ENCODE measurements at regions of chr11 and their contacts with region 1.

Region 1: GRCh38 chr11:113647108-113647507 is 59.0 kb downstream of the TMPRSS5 start:
- DNase-seq: no peak
- ATAC-seq: no peak
- H3K4me3 ChIP-seq: no peak overlapping the region
- H3K4me3 Mint-ChIP-seq: no peak overlapping the region
- H3K27ac ChIP-seq: no peak overlapping the region
- H3K27ac Mint-ChIP-seq: no peak overlapping the region
- H3K4me1 ChIP-seq: no peaks in the 10 kb centered on the region
- H3K4me1 Mint-ChIP-seq: no peaks in the 10 kb centered on the region
- H3K27me3 ChIP-seq: peaks cover 0 to 3% of the 10 kb centered on the region in 2 experiments
- H3K27me3 Mint-ChIP-seq: peaks cover 7% of the 10 kb centered on the region
- CTCF ChIP-seq: no peak

Region 2: DNA sequence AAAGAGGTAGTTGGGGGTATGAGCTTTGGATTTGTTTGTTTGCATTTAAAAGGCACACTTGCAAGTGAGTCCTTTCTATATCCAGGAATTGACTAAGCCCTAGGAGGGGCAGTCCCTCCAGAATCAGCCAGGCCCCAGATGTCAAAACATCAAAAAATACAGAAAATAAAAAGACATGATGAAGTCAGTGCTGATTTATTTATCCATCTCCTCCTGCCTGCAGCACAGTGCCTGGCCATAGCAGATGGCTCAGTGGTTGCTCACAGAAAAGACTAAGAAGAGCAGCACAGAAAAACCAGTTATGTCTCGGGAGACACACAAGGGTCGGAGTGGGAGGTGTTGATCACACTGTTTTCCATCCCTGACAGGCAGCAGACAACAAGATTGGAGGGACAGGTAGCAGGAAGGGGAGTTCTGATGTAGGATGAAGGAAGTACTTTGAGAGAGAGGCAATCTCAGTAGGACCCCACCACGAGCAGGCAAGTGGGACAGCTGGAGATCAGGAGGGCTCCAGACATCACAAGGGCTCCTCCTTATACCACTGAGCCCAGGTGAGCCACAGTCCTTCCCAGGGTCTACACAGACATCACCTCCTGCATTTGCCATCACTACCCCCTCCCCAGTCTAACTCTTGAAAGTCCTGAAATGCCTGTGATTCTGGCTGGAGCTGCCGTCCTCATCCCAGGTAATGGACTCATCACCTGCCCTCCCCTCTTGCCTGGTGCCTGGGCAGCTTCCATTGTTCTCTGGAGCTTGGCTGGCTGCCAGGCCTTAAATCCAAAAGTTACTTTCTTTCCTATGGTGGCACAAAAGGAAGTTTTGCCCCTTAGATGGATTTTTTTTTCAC is 26.7 kb after region 1 on chr11:
- CTCF ChIA-PET with region 1: no interaction called
- POLR2A ChIA-PET with region 1: no interaction called
- intact Hi-C with region 1: loop called in 1 of 2 experiments (anchors 1 kb)
- DNase-seq: no peak
- ATAC-seq: no peak
- H3K4me3 ChIP-seq: no peak overlapping the region
- H3K4me3 Mint-ChIP-seq: no peak overlapping the region
- H3K27ac ChIP-seq: no peak overlapping the region
- H3K27ac Mint-ChIP-seq: no peak overlapping the region
- H3K4me1 ChIP-seq: no peaks in the 10 kb centered on the region
- H3K4me1 Mint-ChIP-seq: no peaks in the 10 kb centered on the region
- H3K27me3 ChIP-seq: no peaks in the 10 kb centered on the region
- H3K27me3 Mint-ChIP-seq: peaks cover 8% of the 10 kb centered on the region
- CTCF ChIP-seq: no peak

Region 3: DNA sequence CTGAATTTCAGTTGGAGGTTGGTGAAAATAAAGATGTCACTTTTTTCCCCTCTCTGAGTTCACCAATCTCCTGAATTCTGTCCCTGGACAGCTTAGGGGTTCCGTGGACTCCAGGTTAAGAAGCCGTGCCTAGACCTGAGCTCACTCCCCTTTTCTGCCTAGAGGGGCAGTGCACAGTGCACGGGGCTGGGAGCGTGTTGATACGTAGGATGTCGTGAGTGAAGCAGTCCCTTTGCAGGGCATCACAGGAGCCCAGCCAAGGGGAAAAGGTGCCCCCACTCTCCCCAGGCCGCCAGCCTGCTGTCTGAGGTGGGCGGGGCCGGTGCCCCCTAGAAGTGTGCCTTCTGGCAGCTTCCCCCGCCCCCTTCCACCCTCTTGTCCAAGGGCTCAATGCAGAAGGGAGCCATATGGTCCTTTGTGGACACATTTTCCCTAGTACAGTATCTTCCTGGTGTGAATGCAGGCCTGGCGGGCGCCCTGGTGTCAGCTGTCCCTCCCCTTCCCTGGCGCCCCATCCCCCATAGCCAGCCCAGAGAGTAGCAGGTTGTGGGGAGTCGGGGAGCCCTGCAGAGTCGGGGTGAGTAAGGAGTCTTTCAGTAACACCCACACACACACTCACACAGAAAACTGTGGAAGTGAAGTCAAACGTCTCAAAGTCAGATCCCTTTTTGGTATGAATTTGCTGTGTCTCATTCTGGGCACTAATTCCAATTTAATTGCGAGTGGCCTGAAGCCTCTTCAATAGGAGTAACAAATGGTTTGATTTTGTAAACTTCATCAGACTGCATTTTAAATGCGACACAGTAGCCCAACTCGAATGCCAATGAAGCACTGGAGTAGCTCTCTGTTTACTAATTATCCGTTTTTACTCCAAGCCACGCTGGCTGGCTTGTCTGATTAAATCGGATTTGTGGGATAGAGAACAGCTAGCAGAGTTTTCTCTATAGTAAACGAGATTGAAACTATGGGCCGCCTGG is 581.6 kb after region 1 on chr11:
- CTCF ChIA-PET with region 1: no interaction called
- POLR2A ChIA-PET with region 1: no interaction called
- intact Hi-C with region 1: no loop called
- DNase-seq: no peak
- ATAC-seq: no peak
- H3K4me3 ChIP-seq: no peak overlapping the region
- H3K4me3 Mint-ChIP-seq: no peak overlapping the region
- H3K27ac ChIP-seq: no peak overlapping the region
- H3K27ac Mint-ChIP-seq: no peak overlapping the region
- H3K4me1 ChIP-seq: peaks cover 8% of the 10 kb centered on the region
- H3K4me1 Mint-ChIP-seq: peaks cover 19% of the 10 kb centered on the region
- H3K27me3 ChIP-seq: no peaks in the 10 kb centered on the region
- H3K27me3 Mint-ChIP-seq: no peaks in the 10 kb centered on the region
- CTCF ChIP-seq: no peak